ENCODE measurements at regions of chr1 and their contacts with region 1.

Region 1: DNA sequence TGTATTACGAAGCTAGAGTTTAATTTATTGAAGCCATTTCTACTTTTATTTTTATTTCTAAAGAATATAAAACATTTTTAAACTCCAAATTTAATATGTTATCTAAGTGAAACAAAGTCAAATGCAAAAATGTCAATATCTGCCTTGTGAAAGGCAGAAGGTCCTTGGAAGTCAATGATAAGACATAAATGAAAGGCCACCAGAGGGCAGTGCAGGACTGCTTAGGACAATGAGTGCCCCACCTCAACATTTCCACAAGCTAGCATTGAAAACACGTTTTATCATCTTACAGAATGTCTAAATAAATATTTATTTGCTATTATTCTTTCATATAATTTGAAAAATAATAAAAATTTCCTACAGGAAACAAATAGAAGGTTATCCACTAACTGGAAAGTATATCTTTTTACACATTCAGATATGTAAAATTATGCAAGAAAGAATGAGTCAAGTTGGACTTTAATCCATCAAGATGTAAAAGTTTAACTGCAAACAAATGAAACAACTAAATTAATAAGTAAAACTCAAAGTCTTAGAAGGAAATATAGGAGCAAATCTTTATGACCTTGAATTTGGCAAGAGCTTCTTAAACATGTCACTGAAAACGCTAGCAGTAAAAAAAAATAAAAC is 140.1 kb upstream of the FMN2 start:
- H3K4me3 Mint-ChIP-seq: no peak overlapping the region
- H3K27ac Mint-ChIP-seq: no peak overlapping the region
- H3K4me1 Mint-ChIP-seq: no peaks in the 10 kb centered on the region
- H3K27me3 Mint-ChIP-seq: peaks cover 1% of the 10 kb centered on the region

Region 2: GRCh38 chr1:239976130-239976968 is 24.7 kb after region 1 on chr1:
- intact Hi-C with region 1: loop called (anchors 1 kb)
- H3K4me3 Mint-ChIP-seq: no peak overlapping the region
- H3K27ac Mint-ChIP-seq: no peak overlapping the region
- H3K4me1 Mint-ChIP-seq: no peaks in the 10 kb centered on the region
- H3K27me3 Mint-ChIP-seq: no peaks in the 10 kb centered on the region